Posterior cingulate gyrus (tissue), 11 donors: ENCODE measurements at regions of chr19 and their contacts with region 1.

Region 1: GRCh38 chr19:11924886-11925650 is at the start of gene ZNF700:
- DNase-seq: peak; percentile 89 to 99 (median 96)

Region 2: GRCh38 chr19:11798391-11799330 is 126.4 kb before region 1 on chr19 and contains the start of gene ZNF491:
- intact Hi-C with region 1: loop called (anchors 5 kb)
- DNase-seq: peak; percentile 84 to 99 (median 94)

Region 3: DNA sequence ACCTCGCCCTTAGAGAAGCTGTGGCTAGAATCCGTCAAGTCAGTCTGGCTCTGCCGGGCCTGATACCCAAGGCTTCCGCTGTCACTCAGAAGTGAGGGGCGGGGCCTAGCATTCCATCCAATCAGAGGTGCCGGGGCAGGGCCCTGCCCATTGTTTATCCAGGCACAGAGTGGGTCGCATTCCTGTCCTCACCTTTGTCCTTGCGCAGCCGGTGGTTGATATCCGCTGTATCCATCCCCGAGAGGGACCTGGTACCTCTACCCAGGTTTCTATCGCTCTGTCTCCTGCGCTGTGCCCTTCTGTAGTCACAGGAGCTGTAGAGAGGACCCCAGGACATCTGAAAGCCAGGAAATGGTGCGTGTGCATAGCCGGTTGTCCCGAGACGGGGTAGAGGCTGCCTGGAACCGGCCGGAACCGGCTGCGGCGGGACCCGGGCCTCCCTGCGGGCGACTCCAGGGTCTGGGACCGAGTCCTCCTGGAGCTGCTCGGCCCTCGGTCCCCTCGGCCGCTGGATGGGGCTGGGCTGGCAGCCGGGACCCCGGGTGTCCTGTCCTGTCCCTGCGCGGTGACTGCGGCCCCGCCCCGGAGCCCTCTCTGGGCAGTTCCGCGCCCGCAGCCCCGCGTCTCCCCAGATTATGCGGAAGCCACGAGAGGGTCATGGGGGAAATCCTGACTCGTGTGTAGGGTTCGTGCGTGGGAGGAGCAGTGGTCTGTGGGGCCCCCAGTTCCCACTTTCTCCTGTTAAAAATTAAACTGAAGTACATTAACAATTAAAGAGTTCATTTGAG is 40.0 kb after region 1 on chr19 and contains the start of gene ZNF763:
- intact Hi-C with region 1: loop called (anchors 2 kb)
- DNase-seq: peak; percentile 80 to 99 (median 94)

Region 4: GRCh38 chr19:11987405-11988281 is 62.6 kb after region 1 on chr19:
- intact Hi-C with region 1: loop called (anchors 1 kb)
- DNase-seq: peak; percentile 83 to 99 (median 92)

Region 5: GRCh38 chr19:12064590-12065538 is 139.8 kb after region 1 on chr19 and contains the start of gene ZNF844:
- intact Hi-C with region 1: loop called (anchors 5 kb)
- DNase-seq: peak; percentile 90 to 99 (median 97)